ENCODE measurements at regions of chr2 and their contacts with region 1.

Region 1: DNA sequence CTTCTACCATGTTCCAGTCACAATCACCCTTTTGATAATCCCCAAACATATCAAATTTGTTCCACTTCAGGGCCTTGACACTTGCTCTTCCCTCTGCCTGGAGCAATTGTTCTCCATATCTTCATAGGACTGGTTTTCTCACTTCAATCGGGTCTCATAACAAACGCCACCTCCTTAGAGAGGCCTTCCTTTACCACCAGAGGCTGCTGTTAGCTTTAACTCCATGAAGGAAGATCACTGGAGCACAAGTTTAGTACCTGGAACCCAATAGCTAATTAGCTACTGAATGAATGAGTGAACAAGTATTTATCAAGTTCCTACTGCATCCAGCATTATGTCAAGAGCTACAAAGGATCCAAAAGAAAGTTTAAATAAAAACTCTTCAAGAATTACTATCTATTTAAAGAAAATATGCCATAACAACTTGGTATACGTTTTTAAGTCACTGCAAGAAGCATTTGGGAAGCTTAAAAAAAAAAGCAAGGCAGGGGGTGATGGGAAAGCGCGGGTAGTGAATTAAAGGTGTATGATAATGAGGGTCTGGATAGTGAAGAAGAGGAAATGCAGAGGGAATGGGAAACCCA is 58.8 kb downstream of the BAZ2B start:
- DNase-seq: peak; percentile 42
- ATAC-seq: peak; percentile 88
- H3K4me3 ChIP-seq: no peak overlapping the region
- H3K27ac ChIP-seq: no peak overlapping the region
- H3K4me1 ChIP-seq: no peaks in the 10 kb centered on the region
- H3K27me3 ChIP-seq: no peaks in the 10 kb centered on the region
- CTCF ChIP-seq: peak; percentile 66
- EP300 ChIP-seq: no peak
- POLR2A ChIP-seq: no peak
- RAD21 ChIP-seq: peak; percentile 57

Region 2: GRCh38 chr2:158154586-158154985 is 1403.0 kb before region 1 on chr2:
- CTCF ChIA-PET with region 1: no interaction called
- POLR2A ChIA-PET with region 1: no interaction called
- in situ Hi-C with region 1: no loop called
- intact Hi-C with region 1: loop called (anchors 5 kb)
- DNase-seq: no peak
- ATAC-seq: no peak
- H3K4me3 ChIP-seq: no peak overlapping the region
- H3K27ac ChIP-seq: no peak overlapping the region
- H3K4me1 ChIP-seq: no peaks in the 10 kb centered on the region
- H3K27me3 ChIP-seq: no peaks in the 10 kb centered on the region; a peak in 2 of 5 replicates
- CTCF ChIP-seq: no peak
- EP300 ChIP-seq: no peak
- POLR2A ChIP-seq: no peak
- RAD21 ChIP-seq: no peak

Region 3: GRCh38 chr2:159677654-159678053 is 120.1 kb after region 1 on chr2:
- CTCF ChIA-PET with region 1: no interaction called
- POLR2A ChIA-PET with region 1: no interaction called
- in situ Hi-C with region 1: no loop called
- intact Hi-C with region 1: loop called (anchors 1 kb)
- DNase-seq: peak; percentile 10
- ATAC-seq: no peak
- H3K4me3 ChIP-seq: no peak overlapping the region
- H3K27ac ChIP-seq: no peak overlapping the region
- H3K4me1 ChIP-seq: no peaks in the 10 kb centered on the region
- H3K27me3 ChIP-seq: no peaks in the 10 kb centered on the region
- CTCF ChIP-seq: peak; percentile 30
- EP300 ChIP-seq: no peak
- POLR2A ChIP-seq: no peak
- RAD21 ChIP-seq: no peak

Region 4: GRCh38 chr2:159695795-159696448 is 138.4 kb after region 1 on chr2:
- CTCF ChIA-PET with region 1: no interaction called
- POLR2A ChIA-PET with region 1: no interaction called
- in situ Hi-C with region 1: loop called (anchors 10 kb)
- intact Hi-C with region 1: no loop called
- DNase-seq: no peak
- ATAC-seq: no peak
- H3K4me3 ChIP-seq: no peak overlapping the region
- H3K27ac ChIP-seq: no peak overlapping the region
- H3K4me1 ChIP-seq: no peaks in the 10 kb centered on the region
- H3K27me3 ChIP-seq: no peaks in the 10 kb centered on the region
- CTCF ChIP-seq: no peak
- EP300 ChIP-seq: no peak
- POLR2A ChIP-seq: no peak
- RAD21 ChIP-seq: no peak